Activated T-helper 2 cell treated with anti-CD3 and anti-CD28 coated beads, Interferon-gamma antibody, Interleukin-2, Interleukin-4, amounts not matched to agents 10 μg/mL and 5 μg/mL and 100 μg/mL, durations not matched to agents 14 hours and 24 hours and 36 hours (primary cell): ENCODE measurements at regions of chr1 and their contacts with region 1.

Region 1: DNA sequence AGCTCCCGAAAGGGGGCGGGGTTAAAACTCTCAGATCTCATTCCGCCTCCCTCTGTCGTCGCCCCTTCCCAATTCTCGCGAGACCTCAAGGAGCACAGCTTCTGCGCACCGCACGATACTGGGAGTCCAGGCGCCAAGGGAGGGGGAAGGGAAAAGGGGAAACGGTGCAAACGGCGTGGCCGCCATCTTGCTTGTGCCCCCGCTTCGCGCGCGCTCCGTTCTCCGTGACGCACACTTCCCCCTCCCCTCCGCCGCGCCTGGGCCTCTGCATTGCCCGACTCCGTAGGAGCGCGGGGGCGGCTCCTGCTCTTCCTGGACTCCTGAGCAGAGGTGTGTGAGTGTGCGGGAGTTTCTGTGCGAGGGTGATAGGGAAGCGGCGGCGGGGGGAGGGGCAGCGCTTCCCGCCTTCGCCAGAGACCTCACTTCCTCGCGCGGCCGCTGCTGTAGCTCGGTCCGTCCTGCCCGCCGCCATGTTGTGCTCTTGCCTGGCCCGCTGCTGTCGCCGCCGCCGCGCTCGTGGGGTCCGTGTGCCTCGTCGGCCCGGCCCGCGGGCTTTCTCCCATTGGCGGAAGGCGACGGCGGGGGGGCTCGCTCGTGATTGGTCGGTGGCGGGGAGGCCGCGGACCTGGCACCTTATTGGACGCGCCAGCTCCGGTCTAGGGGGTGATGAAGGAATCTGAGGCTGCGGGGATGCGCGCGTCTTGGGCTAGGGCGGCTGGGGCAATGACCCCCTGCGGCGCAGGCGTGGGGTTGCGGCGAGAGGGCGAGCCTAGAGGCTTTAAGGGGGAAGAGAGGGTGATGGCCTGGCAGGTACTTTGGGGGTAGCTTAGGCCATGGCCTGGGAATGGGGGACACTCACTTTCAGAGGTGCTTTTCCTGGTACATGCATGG is at the start of gene NFYC:
- DNase-seq: peak; percentile 96
- H3K4me3 Mint-ChIP-seq: peak within 1 kb of the TSS; percentile 89
- H3K27ac Mint-ChIP-seq: peak within 1 kb of the TSS; percentile 97
- H3K4me1 Mint-ChIP-seq: peaks cover 54% of the 10 kb centered on the region
- H3K27me3 Mint-ChIP-seq: no peaks in the 10 kb centered on the region
- total RNA-seq, gene NFYC: 66.0 and 68.4 TPM in 2 replicates

Region 2: GRCh38 chr1:40040511-40041465 is 651.0 kb before region 1 on chr1 and contains the start of gene CAP1:
- intact Hi-C with region 1: loop called (anchors 10 kb)
- DNase-seq: peak; percentile 100
- H3K4me3 Mint-ChIP-seq: peak within 1 kb of the TSS; percentile 94
- H3K27ac Mint-ChIP-seq: peak within 1 kb of the TSS; percentile 99
- H3K4me1 Mint-ChIP-seq: peaks cover 55% of the 10 kb centered on the region
- H3K27me3 Mint-ChIP-seq: no peaks in the 10 kb centered on the region
- total RNA-seq, gene CAP1: 512 and 520 TPM in 2 replicates

Region 3: DNA sequence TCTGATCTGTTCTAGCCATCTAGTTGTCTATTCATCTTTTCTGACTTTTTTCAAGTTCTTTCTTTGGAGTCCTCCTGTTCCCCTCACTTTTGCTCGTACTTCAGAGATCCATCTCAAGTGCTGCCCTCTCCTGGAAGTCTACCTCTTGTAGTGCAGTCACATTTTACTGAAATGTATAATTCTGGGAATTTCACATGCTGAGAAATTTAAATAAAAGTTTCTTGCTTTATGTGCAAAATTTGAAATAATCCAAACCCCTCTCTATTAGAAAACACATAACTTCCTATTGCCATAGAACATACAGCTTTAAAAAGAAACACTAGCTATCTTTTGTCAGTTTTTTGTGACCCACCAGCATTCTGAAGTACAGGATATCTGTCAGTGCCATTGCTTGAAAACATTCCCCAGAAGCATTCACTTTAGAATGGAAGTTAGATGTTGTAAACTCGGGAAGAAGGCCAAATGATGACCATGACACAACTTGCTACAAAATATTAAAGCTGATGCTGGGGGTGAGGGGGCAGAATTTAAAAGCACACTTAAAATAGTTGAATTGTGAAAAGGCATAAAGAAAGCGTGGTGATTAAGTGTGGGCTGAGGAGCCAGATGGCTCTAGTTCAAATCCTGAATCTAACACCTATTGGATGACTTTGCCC is 508.6 kb before region 1 on chr1:
- intact Hi-C with region 1: no loop called
- DNase-seq: no peak
- H3K4me3 Mint-ChIP-seq: no peak overlapping the region
- H3K27ac Mint-ChIP-seq: no peak overlapping the region
- H3K4me1 Mint-ChIP-seq: peaks cover 60% of the 10 kb centered on the region
- H3K27me3 Mint-ChIP-seq: no peaks in the 10 kb centered on the region

Region 4: GRCh38 chr1:40373338-40374283 is 318.2 kb before region 1 on chr1 and contains the start of gene SMAP2:
- intact Hi-C with region 1: loop called (anchors 5 kb)
- DNase-seq: peak; percentile 95
- H3K4me3 Mint-ChIP-seq: peak within 1 kb of the TSS; percentile 97
- H3K27ac Mint-ChIP-seq: peak within 1 kb of the TSS; percentile 97
- H3K4me1 Mint-ChIP-seq: peaks cover 41% of the 10 kb centered on the region
- H3K27me3 Mint-ChIP-seq: no peaks in the 10 kb centered on the region
- total RNA-seq, gene SMAP2: 185 and 186 TPM in 2 replicates

Region 5: GRCh38 chr1:40650075-40650474 is 41.7 kb before region 1 on chr1:
- intact Hi-C with region 1: no loop called
- DNase-seq: no peak
- H3K4me3 Mint-ChIP-seq: no peak overlapping the region
- H3K27ac Mint-ChIP-seq: no peak overlapping the region
- H3K4me1 Mint-ChIP-seq: peaks cover 6% of the 10 kb centered on the region
- H3K27me3 Mint-ChIP-seq: peaks cover 2% of the 10 kb centered on the region

Region 6: DNA sequence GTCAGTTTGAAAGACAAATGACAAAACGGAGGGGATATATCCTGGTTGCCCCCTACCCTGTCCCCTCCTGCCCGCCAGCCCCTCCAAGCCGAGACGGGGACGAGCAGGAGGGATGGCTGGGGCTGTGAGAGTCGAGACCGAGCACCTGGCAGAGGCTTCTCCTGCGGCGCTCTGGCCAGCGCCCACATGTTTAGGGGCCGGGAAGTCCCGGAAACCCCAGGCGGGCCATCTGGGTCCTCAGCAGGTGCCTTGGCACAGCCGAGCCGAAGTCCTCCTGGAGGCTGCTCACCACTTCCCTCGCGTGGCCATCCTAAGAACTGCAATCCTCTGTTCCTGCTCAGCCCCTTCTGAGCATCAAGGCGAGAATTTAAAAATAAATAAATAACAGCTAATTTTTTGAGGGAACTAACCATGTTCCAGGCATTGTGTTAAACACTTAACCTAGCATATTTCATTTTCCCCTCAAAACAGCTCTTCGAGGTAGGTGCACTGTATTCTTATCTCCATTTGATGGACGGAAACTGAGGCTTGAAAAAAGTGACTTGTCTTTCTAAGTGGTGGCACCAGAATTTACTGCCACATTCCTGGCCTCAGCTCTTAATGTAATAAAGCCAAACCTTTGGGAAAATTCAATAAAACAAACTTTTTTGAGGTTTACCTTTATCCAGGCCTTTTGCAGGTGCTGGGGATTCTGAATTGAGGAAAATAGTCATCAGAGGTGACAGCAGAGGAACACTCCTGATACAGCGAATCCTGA is 22.8 kb before region 1 on chr1:
- intact Hi-C with region 1: loop called (anchors 1 kb)
- DNase-seq: peak; percentile 74
- H3K4me3 Mint-ChIP-seq: no peak overlapping the region
- H3K27ac Mint-ChIP-seq: no peak overlapping the region
- H3K4me1 Mint-ChIP-seq: peaks cover 11% of the 10 kb centered on the region
- H3K27me3 Mint-ChIP-seq: peaks cover 4% of the 10 kb centered on the region

Region 7: GRCh38 chr1:40742363-40743061 is 50.7 kb after region 1 on chr1:
- intact Hi-C with region 1: loop called (anchors 2 kb)
- DNase-seq: no peak
- H3K4me3 Mint-ChIP-seq: no peak overlapping the region
- H3K27ac Mint-ChIP-seq: peak overlapping the region; percentile 76
- H3K4me1 Mint-ChIP-seq: peaks cover 34% of the 10 kb centered on the region
- H3K27me3 Mint-ChIP-seq: no peaks in the 10 kb centered on the region

Region 8: GRCh38 chr1:40862008-40862863 is 170.5 kb after region 1 on chr1 and contains the start of gene CITED4:
- intact Hi-C with region 1: loop called (anchors 10 kb)
- DNase-seq: peak; percentile 94
- H3K4me3 Mint-ChIP-seq: peak within 1 kb of the TSS; percentile 89
- H3K27ac Mint-ChIP-seq: peak within 1 kb of the TSS; percentile 97
- H3K4me1 Mint-ChIP-seq: peaks cover 13% of the 10 kb centered on the region
- H3K27me3 Mint-ChIP-seq: peaks cover 28% of the 10 kb centered on the region
- total RNA-seq, gene CITED4: 3.6 and 4.2 TPM in 2 replicates